ENCODE measurements at regions of chr16 and their contacts with region 1.

Region 1: DNA sequence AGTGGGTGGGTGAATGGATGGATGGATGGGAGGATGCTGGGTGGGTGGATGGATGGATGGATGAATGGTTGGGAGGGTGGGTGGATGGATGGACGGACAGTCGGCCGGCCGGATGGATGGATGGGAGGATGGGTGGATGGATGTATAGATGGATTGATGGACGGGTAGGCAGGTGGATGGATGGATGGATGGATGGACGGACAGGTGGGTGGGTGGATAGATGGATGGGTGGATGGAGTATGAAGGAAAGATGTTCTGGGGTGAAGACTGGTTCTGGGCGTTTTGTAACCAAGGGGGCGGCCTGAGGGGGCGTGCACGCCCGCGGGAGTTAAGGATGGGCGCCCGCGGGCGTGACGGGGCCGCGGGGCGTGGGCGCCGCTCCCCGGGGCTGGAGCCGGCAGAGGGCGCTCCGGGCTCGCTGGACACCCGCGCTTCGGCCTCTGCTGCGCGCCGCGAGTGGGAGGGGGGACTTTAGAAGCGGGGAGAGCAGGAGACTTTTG is at the start of gene NECAB2:
- DNase-seq: peak; percentile 8
- ATAC-seq: peak; percentile 90
- H3K4me3 ChIP-seq: peak within 1 kb of the TSS; percentile 16; the same call in 1 of the 2 replicates
- H3K27ac ChIP-seq: no peak within 1 kb of the TSS
- H3K4me1 ChIP-seq: no peaks in the 10 kb centered on the region
- H3K27me3 ChIP-seq: peaks cover 25% of the 10 kb centered on the region
- CTCF ChIP-seq: peak; percentile 73
- POLR2A ChIP-seq: no peak
- RAD21 ChIP-seq: peak; percentile 84
- total RNA-seq, gene NECAB2: under 0.01 TPM in 1 of 2 replicates, not detected in the other

Region 2: DNA sequence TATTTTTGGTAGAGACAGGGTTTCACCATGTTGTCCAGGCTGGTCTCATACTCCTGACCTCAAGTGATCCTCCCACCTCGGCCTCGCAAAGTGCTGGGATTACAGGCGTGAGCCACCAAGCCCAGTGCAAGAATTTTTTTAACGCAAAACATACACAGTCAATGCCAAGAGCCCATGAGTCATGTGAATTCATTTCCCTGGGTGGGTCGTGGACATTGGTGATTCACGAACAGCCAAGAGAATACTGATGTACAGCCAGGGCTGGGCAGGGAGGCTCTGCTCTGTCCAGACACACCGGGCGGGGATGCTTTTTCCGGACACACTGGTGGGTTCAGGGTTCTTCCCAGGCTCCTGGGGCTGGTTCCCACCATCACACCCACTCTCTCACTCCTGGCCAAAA is 57.0 kb after region 1 on chr16:
- CTCF ChIA-PET with region 1: no interaction called
- POLR2A ChIA-PET with region 1: no interaction called
- dilution Hi-C with region 1: no loop called
- in situ Hi-C with region 1: no loop called
- intact Hi-C with region 1: loop called (anchors 2 kb)
- DNase-seq: peak; percentile 90
- ATAC-seq: peak; percentile 98
- H3K4me3 ChIP-seq: no peak overlapping the region
- H3K27ac ChIP-seq: no peak overlapping the region
- H3K4me1 ChIP-seq: peaks cover 7% of the 10 kb centered on the region
- H3K27me3 ChIP-seq: peaks cover 18% of the 10 kb centered on the region
- CTCF ChIP-seq: no peak
- POLR2A ChIP-seq: no peak
- RAD21 ChIP-seq: no peak

Region 3: DNA sequence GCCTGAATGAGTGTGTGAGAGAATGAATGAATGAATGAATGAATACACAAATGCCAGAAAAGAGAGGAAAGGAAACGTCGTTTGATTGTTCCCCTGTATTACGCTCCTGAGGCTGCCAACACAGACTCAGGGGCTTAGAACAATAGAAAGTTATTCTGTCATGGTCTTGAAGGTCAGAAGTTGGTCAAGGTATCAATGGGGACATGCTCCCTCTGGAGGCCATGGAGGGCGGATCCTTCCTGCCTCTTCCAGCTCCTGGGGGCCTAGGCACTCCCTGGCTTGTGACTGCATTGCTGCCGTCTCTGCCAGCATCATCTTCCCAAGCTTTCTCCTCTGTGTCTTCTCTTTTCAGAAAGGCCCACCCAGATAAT is 76.2 kb after region 1 on chr16:
- CTCF ChIA-PET with region 1: no interaction called
- POLR2A ChIA-PET with region 1: no interaction called
- dilution Hi-C with region 1: no loop called
- in situ Hi-C with region 1: no loop called
- intact Hi-C with region 1: loop called (anchors 5 kb)
- DNase-seq: peak; percentile 28
- ATAC-seq: peak; percentile 67
- H3K4me3 ChIP-seq: no peak overlapping the region
- H3K27ac ChIP-seq: no peak overlapping the region
- H3K4me1 ChIP-seq: no peaks in the 10 kb centered on the region
- H3K27me3 ChIP-seq: peaks cover 40% of the 10 kb centered on the region
- CTCF ChIP-seq: peak; percentile 40
- POLR2A ChIP-seq: no peak
- RAD21 ChIP-seq: peak; percentile 46

Measured in IMR-90 (cell line).